ENCODE measurements at regions of chr15 and their contacts with region 1.

Region 1: GRCh38 chr15:98727115-98728085 is 79.1 kb downstream of the IGF1R start:
- DNase-seq: peak; percentile 83
- ATAC-seq: peak; percentile 98
- H3K4me3 ChIP-seq: peak overlapping the region; percentile 21 to 48
- H3K27ac ChIP-seq: peak overlapping the region; percentile 98
- H3K4me1 ChIP-seq: peaks cover 70% of the 10 kb centered on the region
- H3K27me3 ChIP-seq: no peaks in the 10 kb centered on the region
- CTCF ChIP-seq: no peak

Region 2: GRCh38 chr15:98272625-98273024 is 454.8 kb before region 1 on chr15:
- CTCF ChIA-PET with region 1: no interaction called
- POLR2A ChIA-PET with region 1: no interaction called
- in situ Hi-C with region 1: no loop called
- intact Hi-C with region 1: no loop called
- DNase-seq: no peak
- ATAC-seq: no peak
- H3K4me3 ChIP-seq: no peak overlapping the region
- H3K27ac ChIP-seq: no peak overlapping the region
- H3K4me1 ChIP-seq: no peaks in the 10 kb centered on the region
- H3K27me3 ChIP-seq: no peaks in the 10 kb centered on the region; the same call in 1 of the 2 replicates
- CTCF ChIP-seq: no peak

Region 3: GRCh38 chr15:98746623-98747155 is 19.3 kb after region 1 on chr15:
- CTCF ChIA-PET with region 1: no interaction called
- POLR2A ChIA-PET with region 1: interaction called, 14 read pairs
- in situ Hi-C with region 1: no loop called
- intact Hi-C with region 1: no loop called
- DNase-seq: no peak
- ATAC-seq: no peak
- H3K4me3 ChIP-seq: no peak overlapping the region
- H3K27ac ChIP-seq: 0 out of 2 replicates have a peak overlapping the region, but pooled peaks have one; percentile 18
- H3K4me1 ChIP-seq: peaks cover 33% of the 10 kb centered on the region
- H3K27me3 ChIP-seq: no peaks in the 10 kb centered on the region
- CTCF ChIP-seq: no peak

Region 4: DNA sequence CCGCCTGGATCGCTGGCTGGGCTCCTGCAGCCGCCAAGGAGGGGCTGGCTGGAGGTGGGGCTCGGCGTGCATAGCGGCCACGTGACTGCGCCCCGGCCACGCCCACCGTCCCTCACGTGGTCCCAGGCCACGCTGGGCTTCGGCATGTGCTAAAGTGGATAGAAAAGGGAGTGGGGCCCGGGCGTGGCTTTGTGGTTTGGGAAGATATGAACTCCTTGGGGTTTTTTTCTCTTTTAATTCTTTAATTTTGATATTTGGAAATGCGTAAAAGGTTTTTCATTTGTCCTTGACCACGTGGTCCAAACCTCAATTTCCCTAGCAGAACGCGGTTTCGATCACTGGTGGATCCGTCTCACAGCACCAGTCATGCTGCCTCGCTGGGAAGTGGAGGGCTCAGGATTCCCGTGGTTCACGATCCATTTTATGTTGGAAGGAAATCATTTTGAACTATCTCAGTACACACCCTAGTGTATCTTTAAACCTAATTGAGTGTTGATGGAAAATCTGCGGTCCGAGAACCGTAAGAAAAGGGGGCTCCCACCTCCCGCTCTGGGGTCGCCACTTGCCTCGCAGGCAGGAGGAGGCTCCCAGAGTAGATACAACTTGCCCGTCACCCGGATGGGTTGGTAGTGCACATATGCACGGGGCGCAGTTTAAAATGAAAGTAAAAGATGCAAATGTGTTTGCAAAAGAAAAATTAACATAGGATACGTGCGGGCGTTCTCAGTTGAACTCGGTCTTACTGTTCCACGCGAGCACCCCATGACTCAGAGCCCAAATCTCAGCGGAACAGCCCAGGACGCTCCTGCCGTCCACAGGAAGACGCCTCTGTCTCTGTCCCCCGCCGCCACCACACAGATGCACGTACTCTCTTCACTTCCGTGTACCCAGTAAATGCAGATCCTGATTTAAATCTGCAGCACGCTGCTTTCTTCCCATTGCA is 138.3 kb after region 1 on chr15:
- CTCF ChIA-PET with region 1: no interaction called
- POLR2A ChIA-PET with region 1: interaction called, 10 read pairs
- in situ Hi-C with region 1: no loop called
- intact Hi-C with region 1: no loop called
- DNase-seq: no peak
- ATAC-seq: peak; percentile 93
- H3K4me3 ChIP-seq: peak overlapping the region; percentile 55 to 79
- H3K27ac ChIP-seq: peak overlapping the region; percentile 100
- H3K4me1 ChIP-seq: peaks cover 76% of the 10 kb centered on the region
- H3K27me3 ChIP-seq: no peaks in the 10 kb centered on the region
- CTCF ChIP-seq: no peak